MCF 10A (cell line): ENCODE measurements at regions of chr13 and their contacts with region 1.

Region 1: GRCh38 chr13:44484562-44485138 is 91.5 kb downstream of the TSC22D1 start:
- DNase-seq: no peak
- H3K4me3 Mint-ChIP-seq: no peak overlapping the region
- H3K27ac Mint-ChIP-seq: no peak overlapping the region
- H3K4me1 Mint-ChIP-seq: no peaks in the 10 kb centered on the region
- H3K27me3 Mint-ChIP-seq: no peaks in the 10 kb centered on the region
- CTCF ChIP-seq: no peak

Region 2: GRCh38 chr13:44470638-44471562 is 13.8 kb before region 1 on chr13:
- CTCF ChIA-PET with region 1: interaction called, 41 read pairs
- POLR2A ChIA-PET with region 1: interaction called, 4 read pairs
- intact Hi-C with region 1: no loop called
- DNase-seq: peak; percentile 50
- H3K4me3 Mint-ChIP-seq: no peak overlapping the region
- H3K27ac Mint-ChIP-seq: no peak overlapping the region
- H3K4me1 Mint-ChIP-seq: peaks cover 6% of the 10 kb centered on the region
- H3K27me3 Mint-ChIP-seq: no peaks in the 10 kb centered on the region
- CTCF ChIP-seq: peak; percentile 58

Region 3: GRCh38 chr13:44879463-44880058 is 394.9 kb after region 1 on chr13:
- CTCF ChIA-PET with region 1: interaction called, 5 read pairs
- POLR2A ChIA-PET with region 1: no interaction called
- intact Hi-C with region 1: loop called (anchors 1 kb)
- DNase-seq: peak; percentile 62
- H3K4me3 Mint-ChIP-seq: no peak overlapping the region
- H3K27ac Mint-ChIP-seq: no peak overlapping the region
- H3K4me1 Mint-ChIP-seq: no peaks in the 10 kb centered on the region
- H3K27me3 Mint-ChIP-seq: no peaks in the 10 kb centered on the region
- CTCF ChIP-seq: peak; percentile 45

Region 4: GRCh38 chr13:44917589-44918325 is 433.1 kb after region 1 on chr13:
- CTCF ChIA-PET with region 1: interaction called, 9 read pairs
- POLR2A ChIA-PET with region 1: interaction called, 4 read pairs
- intact Hi-C with region 1: loop called (anchors 1 kb)
- DNase-seq: peak; percentile 96
- H3K4me3 Mint-ChIP-seq: no peak overlapping the region
- H3K27ac Mint-ChIP-seq: no peak overlapping the region
- H3K4me1 Mint-ChIP-seq: peaks cover 18% of the 10 kb centered on the region
- H3K27me3 Mint-ChIP-seq: no peaks in the 10 kb centered on the region
- CTCF ChIP-seq: peak; percentile 54

Region 5: GRCh38 chr13:44969551-44970484 is 485.2 kb after region 1 on chr13:
- CTCF ChIA-PET with region 1: interaction called, 50 read pairs
- POLR2A ChIA-PET with region 1: interaction called, 8 read pairs
- intact Hi-C with region 1: loop called (anchors 1 kb)
- DNase-seq: peak; percentile 66
- H3K4me3 Mint-ChIP-seq: no peak overlapping the region
- H3K27ac Mint-ChIP-seq: no peak overlapping the region
- H3K4me1 Mint-ChIP-seq: peaks cover 15% of the 10 kb centered on the region
- H3K27me3 Mint-ChIP-seq: no peaks in the 10 kb centered on the region
- CTCF ChIP-seq: peak; percentile 70